Activated CD4-positive, alpha-beta T cell treated with anti-CD3 and anti-CD28 coated beads, Interleukin-2, amount 10 ng/mL, durations not matched to agents 24 days and 14 days (primary cell): ENCODE measurements at regions of chr5 and their contacts with region 1.

Region 1: GRCh38 chr5:32232441-32233219 is 58.5 kb upstream of the GOLPH3 start:
- DNase-seq: peak; percentile 93
- H3K4me3 Mint-ChIP-seq: no peak overlapping the region
- H3K27ac Mint-ChIP-seq: peak overlapping the region; percentile 45
- H3K4me1 Mint-ChIP-seq: peaks cover 15% of the 10 kb centered on the region
- H3K27me3 Mint-ChIP-seq: no peaks in the 10 kb centered on the region

Region 2: GRCh38 chr5:31757806-31758205 is 474.8 kb before region 1 on chr5:
- intact Hi-C with region 1: no loop called
- DNase-seq: no peak
- H3K4me3 Mint-ChIP-seq: no peak overlapping the region
- H3K27ac Mint-ChIP-seq: no peak overlapping the region
- H3K4me1 Mint-ChIP-seq: no peaks in the 10 kb centered on the region
- H3K27me3 Mint-ChIP-seq: no peaks in the 10 kb centered on the region

Region 3: DNA sequence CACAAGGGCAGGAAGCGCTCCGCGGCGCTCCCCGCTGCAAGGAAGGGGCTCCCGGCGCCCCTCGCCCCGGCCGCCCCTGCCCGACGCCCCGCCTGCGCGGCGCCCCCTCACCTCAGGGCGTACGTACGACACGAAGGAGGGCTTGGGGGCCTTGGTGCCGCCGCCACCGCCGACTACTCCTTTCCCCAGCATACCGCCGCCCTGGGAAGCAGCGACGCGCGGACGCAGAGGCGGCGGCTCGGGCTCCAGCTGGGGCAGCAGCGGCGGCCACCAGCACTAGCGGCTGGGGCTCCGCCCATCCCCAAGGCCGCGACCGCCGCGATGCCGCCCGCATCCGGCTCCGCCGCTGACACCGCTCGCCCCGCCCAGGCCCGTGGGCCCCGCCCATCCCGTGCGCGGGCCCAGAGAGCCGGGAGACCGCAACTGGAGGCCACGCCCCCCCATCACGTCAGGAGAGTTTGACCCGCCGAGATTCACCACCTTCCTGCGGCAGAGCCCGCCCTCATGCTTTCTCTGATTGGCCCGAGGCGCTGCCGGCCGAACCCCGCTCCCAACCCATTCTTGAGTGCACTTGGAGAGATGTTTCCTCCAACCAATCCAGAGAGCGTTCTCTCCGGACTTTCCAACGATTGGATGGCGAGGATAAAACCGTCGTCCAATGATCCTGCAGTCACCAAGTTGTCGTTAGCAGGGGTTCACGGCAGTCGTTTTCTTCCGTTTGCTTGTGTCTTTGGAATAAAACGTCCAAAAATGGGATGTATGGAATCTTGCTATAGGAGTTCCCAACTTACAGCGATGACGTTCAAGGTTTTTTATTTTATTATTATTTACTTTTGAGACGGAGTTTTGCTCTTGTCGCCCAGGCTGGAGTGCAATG is 80.3 kb after region 1 on chr5 and contains the start of gene MTMR12:
- intact Hi-C with region 1: no loop called
- DNase-seq: peak; percentile 100
- H3K4me3 Mint-ChIP-seq: peak within 1 kb of the TSS; percentile 96
- H3K27ac Mint-ChIP-seq: peak within 1 kb of the TSS; percentile 87
- H3K4me1 Mint-ChIP-seq: peaks cover 28% of the 10 kb centered on the region
- H3K27me3 Mint-ChIP-seq: no peaks in the 10 kb centered on the region
- total RNA-seq, gene MTMR12: 26.5 and 29.8 TPM in 2 replicates

Region 4: DNA sequence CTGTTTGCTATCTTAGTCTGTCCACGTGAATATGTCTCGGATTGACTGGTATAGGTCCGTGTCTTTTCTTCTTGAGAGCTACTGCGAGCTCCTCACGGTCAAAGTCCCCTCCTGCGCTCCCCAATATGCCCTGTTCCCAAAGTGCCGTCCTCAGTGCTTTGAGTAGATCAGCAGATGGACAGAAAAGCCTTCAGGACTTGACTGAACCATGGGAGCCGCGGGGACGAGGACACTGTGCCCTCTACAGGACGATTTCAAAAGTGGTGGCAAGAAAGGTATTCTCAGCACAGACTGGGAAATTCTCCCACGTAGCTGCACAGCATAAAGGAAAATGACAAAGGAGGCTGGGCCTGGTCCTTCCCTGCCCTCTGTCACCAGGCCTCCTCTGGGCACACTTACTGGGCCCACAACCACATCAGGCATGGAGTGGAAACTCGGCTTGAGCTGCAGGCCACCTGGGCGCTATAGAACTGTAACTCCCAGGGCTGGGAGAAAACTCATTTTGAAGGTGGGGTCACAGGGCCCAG is 96.7 kb after region 1 on chr5:
- intact Hi-C with region 1: loop called (anchors 1 kb)
- DNase-seq: peak; percentile 87
- H3K4me3 Mint-ChIP-seq: no peak overlapping the region
- H3K27ac Mint-ChIP-seq: no peak overlapping the region
- H3K4me1 Mint-ChIP-seq: peaks cover 4% of the 10 kb centered on the region
- H3K27me3 Mint-ChIP-seq: peaks cover 2% of the 10 kb centered on the region